Left ventricle myocardium inferior (tissue), 1 donor: ENCODE measurements at regions of chr10 and their contacts with region 1.

Region 1: GRCh38 chr10:110893559-110894179 is 21.9 kb downstream of the PDCD4 start:
- DNase-seq: no peak
- H3K4me3 ChIP-seq: no peak overlapping the region
- H3K27ac ChIP-seq: no peak overlapping the region
- H3K4me1 ChIP-seq: peaks cover 28% of the 10 kb centered on the region
- H3K27me3 ChIP-seq: no peaks in the 10 kb centered on the region
- CTCF ChIP-seq: peak; percentile 69

Region 2: GRCh38 chr10:110746254-110746826 is 147.3 kb before region 1 on chr10:
- intact Hi-C with region 1: loop called (anchors 5 kb)
- DNase-seq: no peak
- H3K4me3 ChIP-seq: no peak overlapping the region
- H3K27ac ChIP-seq: peak overlapping the region; percentile 87
- H3K4me1 ChIP-seq: peaks cover 92% of the 10 kb centered on the region
- H3K27me3 ChIP-seq: no peaks in the 10 kb centered on the region
- CTCF ChIP-seq: peak; percentile 83

Region 3: GRCh38 chr10:110803830-110804338 is 89.8 kb before region 1 on chr10:
- intact Hi-C with region 1: loop called (anchors 10 kb)
- DNase-seq: no peak
- H3K4me3 ChIP-seq: no peak overlapping the region
- H3K27ac ChIP-seq: peak overlapping the region; percentile 62
- H3K4me1 ChIP-seq: peaks cover 62% of the 10 kb centered on the region
- H3K27me3 ChIP-seq: no peaks in the 10 kb centered on the region
- CTCF ChIP-seq: peak; percentile 69